Aorta (tissue), 5 donors: ENCODE measurements at regions of chr18 and their contacts with region 1.

Region 1: GRCh38 chr18:77000527-77000926 is 132.1 kb downstream of the MBP start:
- DNase-seq: peak; percentile 69 to 87
- ATAC-seq: peak; percentile 79
- H3K4me3 ChIP-seq: peak overlapping the region in 1 of 2 donors; percentile 29
- H3K27ac ChIP-seq: no peak overlapping the region
- H3K4me1 ChIP-seq: no peaks in the 10 kb centered on the region
- H3K27me3 ChIP-seq: no peaks in the 10 kb centered on the region

Region 2: GRCh38 chr18:76953583-76954233 is 46.8 kb before region 1 on chr18:
- intact Hi-C with region 1: no loop called
- DNase-seq: peak; percentile 73 to 88
- ATAC-seq: peak; percentile 63
- H3K4me3 ChIP-seq: no peak overlapping the region
- H3K27ac ChIP-seq: no peak overlapping the region
- H3K4me1 ChIP-seq: no peaks in the 10 kb centered on the region
- H3K27me3 ChIP-seq: no peaks in the 10 kb centered on the region

Region 3: GRCh38 chr18:77054606-77055428 is 54.3 kb after region 1 on chr18:
- intact Hi-C with region 1: loop called (anchors 5 kb)
- DNase-seq: peak; percentile 89 to 94
- ATAC-seq: peak; percentile 67
- H3K4me3 ChIP-seq: no peak overlapping the region
- H3K27ac ChIP-seq: no peak overlapping the region
- H3K4me1 ChIP-seq: no peaks in the 10 kb centered on the region
- H3K27me3 ChIP-seq: no peaks in the 10 kb centered on the region

Region 4: GRCh38 chr18:77207540-77207939 is 207.0 kb after region 1 on chr18:
- intact Hi-C with region 1: loop called (anchors 1 to 2 kb)
- DNase-seq: peak; percentile 80 to 90
- ATAC-seq: peak; percentile 87
- H3K4me3 ChIP-seq: no peak overlapping the region
- H3K27ac ChIP-seq: peak overlapping the region in 1 of 2 donors; percentile 13
- H3K4me1 ChIP-seq: no peaks in the 10 kb centered on the region
- H3K27me3 ChIP-seq: no peaks in the 10 kb centered on the region